ENCODE measurements at regions of chr3 and their contacts with region 1.

Region 1: GRCh38 chr3:99172736-99173657 is 271.5 kb upstream of the DCBLD2 start:
- DNase-seq: peak in 1 of 2 experiments; percentile 69
- H3K4me3 ChIP-seq: no peak overlapping the region
- H3K27ac ChIP-seq: no peak overlapping the region
- H3K4me1 ChIP-seq: 0 out of 7 replicates have a peak, but pooled peaks cover 0 to 1% (median 0%) of the 10 kb centered on the region in 4 experiments
- H3K27me3 ChIP-seq: no peaks in the 10 kb centered on the region
- CTCF ChIP-seq: peak in 2 of 3 experiments; percentile 76 to 77; a peak in 3 of 4 replicates
- EP300 ChIP-seq: no peak
- POLR2A ChIP-seq: no peak
- RAD21 ChIP-seq: peak; percentile 78 to 80

Region 2: DNA sequence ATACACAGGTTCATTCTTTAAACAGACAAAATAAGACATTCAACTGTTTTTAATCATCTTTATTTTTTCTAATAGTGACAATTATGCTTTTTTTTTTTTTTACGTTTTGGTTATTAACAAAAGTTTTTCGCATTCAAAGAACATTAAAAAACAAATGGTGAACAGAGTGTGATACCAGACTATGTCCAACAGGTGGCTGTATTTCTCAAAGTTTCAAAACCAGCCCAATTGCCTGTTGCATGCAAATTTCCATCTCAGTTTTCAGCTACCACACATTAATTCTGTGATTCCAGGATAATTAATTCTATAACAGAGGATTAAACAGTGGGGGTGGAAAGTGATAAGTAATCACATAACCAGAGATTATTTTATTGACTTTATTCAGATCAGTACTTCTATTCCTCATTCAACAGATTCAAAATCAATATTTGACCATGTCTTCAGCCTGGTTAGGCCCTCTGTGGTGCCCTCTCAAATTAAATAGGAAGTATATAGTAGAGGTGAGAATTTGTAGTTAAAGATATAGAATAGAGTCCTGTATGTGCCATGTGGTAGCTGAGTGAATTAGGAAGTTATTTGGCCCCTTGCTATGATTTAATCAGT is 149.3 kb before region 1 on chr3:
- CTCF ChIA-PET with region 1: interaction called, 13 read pairs
- POLR2A ChIA-PET with region 1: no interaction called
- DNase-seq: no peak
- H3K4me3 ChIP-seq: no peak overlapping the region
- H3K27ac ChIP-seq: no peak overlapping the region
- H3K4me1 ChIP-seq: no peaks in the 10 kb centered on the region
- H3K27me3 ChIP-seq: no peaks in the 10 kb centered on the region
- CTCF ChIP-seq: peak in 2 of 3 experiments; percentile 47 to 53; a peak in 2 of 4 replicates
- EP300 ChIP-seq: no peak
- POLR2A ChIP-seq: no peak
- RAD21 ChIP-seq: peak; percentile 69 to 72

Region 3: DNA sequence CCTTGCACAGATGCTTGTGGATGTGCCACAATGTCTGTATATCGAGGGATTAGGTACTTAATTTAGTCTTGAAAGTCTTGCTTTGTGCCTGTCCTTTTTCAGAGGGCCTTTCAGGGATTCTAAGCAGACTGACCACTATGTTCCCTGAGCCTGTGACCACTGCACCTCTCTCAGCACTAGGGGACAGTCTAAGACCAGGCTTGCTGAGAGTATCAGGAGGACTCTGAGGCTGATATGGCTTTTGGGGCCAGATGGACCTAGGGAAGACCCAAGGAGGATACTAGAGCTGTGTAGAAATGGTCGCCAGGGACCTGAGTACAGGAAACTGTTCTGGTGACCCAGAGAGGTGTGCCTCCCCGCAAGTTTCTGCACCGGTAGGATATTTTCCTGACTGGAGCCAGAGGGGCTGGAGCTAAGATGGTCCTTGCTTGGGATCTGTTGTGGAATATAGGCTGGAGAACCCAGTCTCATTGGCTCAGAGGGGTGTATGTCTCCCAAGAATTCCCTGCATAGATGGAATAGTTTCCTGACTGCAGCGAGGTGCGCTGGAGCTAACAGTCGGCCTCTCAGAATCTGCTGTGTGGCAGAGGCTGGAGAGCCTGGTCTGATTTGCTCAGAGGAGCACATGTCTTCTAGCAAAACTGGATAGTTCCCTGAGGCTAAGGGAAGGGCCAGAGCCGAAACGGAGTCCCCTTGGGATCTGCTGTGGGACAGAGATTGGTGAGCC is 58.3 kb before region 1 on chr3:
- CTCF ChIA-PET with region 1: interaction called, 18 read pairs
- POLR2A ChIA-PET with region 1: no interaction called
- DNase-seq: peak; percentile 41 to 52
- H3K4me3 ChIP-seq: no peak overlapping the region
- H3K27ac ChIP-seq: no peak overlapping the region
- H3K4me1 ChIP-seq: no peaks in the 10 kb centered on the region
- H3K27me3 ChIP-seq: no peaks in the 10 kb centered on the region
- CTCF ChIP-seq: peak; percentile 79 to 96 (median 91)
- EP300 ChIP-seq: no peak
- POLR2A ChIP-seq: no peak
- RAD21 ChIP-seq: peak; percentile 99

Region 4: DNA sequence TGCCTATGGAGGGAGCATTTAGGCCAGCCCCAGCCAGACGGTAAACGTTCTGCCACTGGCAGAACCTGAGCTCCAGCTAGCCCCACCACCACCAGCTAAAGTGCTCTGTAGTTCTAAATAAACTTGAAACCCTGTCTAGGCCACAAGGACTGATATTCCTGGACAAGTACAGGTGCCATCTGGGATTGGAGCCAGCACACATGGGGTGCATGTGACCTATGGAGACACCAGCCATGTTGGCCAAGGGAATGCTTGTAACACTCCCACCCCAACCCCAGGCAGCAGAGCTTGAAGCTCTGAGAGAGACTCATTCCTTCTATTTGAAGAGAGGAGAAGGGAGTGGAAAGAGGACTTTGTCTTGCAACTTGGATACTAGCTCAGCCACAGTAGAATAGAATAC is 13.0 kb after region 1 on chr3:
- CTCF ChIA-PET with region 1: interaction called, 13 read pairs
- POLR2A ChIA-PET with region 1: no interaction called
- DNase-seq: no peak
- H3K4me3 ChIP-seq: no peak overlapping the region
- H3K27ac ChIP-seq: no peak overlapping the region
- H3K4me1 ChIP-seq: no peaks in the 10 kb centered on the region
- H3K27me3 ChIP-seq: peaks cover 0 to 1% (median 0%) of the 10 kb centered on the region in 4 experiments; a peak in 1 of 7 replicates
- CTCF ChIP-seq: no peak
- EP300 ChIP-seq: no peak
- POLR2A ChIP-seq: no peak
- RAD21 ChIP-seq: no peak

Region 5: DNA sequence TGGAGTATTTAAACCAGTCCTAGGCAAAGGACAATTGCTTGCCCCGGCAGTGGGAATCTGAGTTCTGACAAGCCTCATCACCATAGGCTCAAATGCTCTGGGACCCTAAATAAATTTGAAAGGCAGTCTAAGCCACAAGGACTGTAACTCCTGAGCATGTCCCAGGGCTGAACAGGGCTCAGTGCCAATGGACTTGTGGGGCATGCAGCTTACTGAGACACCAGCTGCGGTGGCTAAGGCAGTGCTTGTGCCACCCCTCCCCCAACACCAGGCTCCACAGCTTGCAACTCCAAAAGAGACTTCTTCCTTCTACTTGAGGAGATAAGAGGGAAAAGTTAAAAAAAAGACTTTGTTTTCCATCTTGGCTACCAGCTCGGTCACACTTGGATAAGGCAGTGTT is 18.2 kb after region 1 on chr3:
- CTCF ChIA-PET with region 1: interaction called, 13 read pairs
- POLR2A ChIA-PET with region 1: no interaction called
- DNase-seq: no peak
- H3K4me3 ChIP-seq: no peak overlapping the region
- H3K27ac ChIP-seq: no peak overlapping the region
- H3K4me1 ChIP-seq: no peaks in the 10 kb centered on the region
- H3K27me3 ChIP-seq: peaks cover 0 to 1% (median 0%) of the 10 kb centered on the region in 4 experiments; a peak in 1 of 7 replicates
- CTCF ChIP-seq: no peak
- EP300 ChIP-seq: no peak
- POLR2A ChIP-seq: no peak
- RAD21 ChIP-seq: no peak

Region 6: DNA sequence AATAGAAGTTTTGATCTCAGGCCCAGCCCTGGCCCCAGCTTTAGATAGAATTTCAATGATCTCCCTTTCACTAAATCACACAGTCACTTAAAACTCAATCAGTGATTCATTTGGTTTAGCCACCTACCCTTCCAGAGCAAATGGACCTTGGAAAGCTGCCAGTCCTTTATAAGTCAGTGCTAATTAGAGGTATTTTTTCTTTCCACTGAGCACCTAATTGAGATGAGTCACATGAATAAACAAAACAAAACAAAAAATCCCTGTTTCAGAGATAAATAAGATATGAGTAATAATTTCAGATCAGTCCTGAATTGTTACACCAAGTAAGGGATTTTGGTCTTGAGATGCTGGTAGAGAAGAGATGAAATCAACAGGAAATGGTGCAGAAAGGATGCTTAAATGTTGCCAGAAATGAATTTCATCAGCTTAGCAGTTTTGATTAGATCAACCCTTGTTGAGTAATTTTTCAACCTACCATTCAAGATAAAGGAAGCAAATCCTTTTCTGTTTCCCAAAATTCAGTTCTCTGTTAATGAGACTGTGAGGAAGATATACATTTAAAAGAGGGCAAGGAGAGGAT is 113.4 kb after region 1 on chr3:
- CTCF ChIA-PET with region 1: no interaction called
- POLR2A ChIA-PET with region 1: no interaction called
- DNase-seq: no peak
- H3K4me3 ChIP-seq: no peak overlapping the region
- H3K27ac ChIP-seq: no peak overlapping the region
- H3K4me1 ChIP-seq: no peaks in the 10 kb centered on the region
- H3K27me3 ChIP-seq: no peaks in the 10 kb centered on the region
- CTCF ChIP-seq: no peak
- EP300 ChIP-seq: no peak
- POLR2A ChIP-seq: no peak
- RAD21 ChIP-seq: no peak